Testis (tissue), 5 donors: ENCODE measurements at regions of chr22 and their contacts with region 1.

Region 1: DNA sequence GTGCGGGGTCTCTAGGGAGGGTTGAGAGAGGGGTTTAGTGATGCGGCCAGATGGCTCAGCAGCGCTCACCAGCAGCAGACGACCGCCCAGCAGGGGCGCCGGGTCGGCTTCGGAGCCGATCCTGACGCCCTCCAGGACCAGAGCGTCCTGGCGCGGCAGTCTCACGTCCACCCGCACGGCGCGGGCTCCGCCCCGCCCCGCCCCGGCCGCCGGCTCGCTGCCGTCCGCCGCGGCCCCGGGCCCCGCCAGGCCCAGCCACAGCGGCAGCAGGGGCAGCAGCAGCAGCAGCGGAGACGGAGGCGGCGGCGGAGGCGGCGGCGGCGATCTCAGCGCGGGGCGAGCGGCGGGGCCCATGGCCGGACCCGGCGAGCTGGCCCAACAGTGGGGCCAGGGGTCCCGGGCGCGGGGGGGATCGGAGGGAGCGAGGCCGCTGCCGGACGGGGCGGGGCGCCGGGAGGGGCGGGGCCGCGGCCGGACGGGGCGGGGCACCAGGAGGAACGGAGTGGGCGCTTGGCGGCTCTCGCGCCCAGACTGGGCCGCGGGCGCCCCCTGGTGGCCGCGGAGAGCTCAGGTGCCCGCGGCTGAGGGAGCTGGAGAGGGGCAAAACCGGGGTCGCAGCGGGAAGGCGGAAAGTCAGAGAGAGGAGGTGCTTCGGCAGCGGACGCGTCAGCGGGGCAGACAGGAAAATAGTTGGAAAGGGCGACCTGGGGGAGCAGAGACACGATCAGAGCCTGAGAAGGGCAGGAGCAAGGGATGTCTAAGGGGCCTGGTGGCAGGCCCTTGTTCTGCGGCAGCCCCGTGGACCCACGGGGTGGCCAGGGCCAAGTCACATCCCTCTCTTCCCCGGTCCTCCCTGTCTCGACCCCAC is at the start of gene RNF215:
- DNase-seq: peak; percentile 86
- H3K4me3 ChIP-seq: peak within 1 kb of the TSS; percentile 58 to 59
- H3K27ac ChIP-seq: peak within 1 kb of the TSS in 1 of 2 donors; percentile 69
- H3K4me1 ChIP-seq: peaks cover 10% of the 10 kb centered on the region
- H3K27me3 ChIP-seq: no peaks in the 10 kb centered on the region
- CTCF ChIP-seq: peak; percentile 96 to 98 (median 97)
- POLR2A ChIP-seq: no peak
- total RNA-seq, gene RNF215: 20.9 to 24.6 TPM

Region 2: GRCh38 chr22:30044369-30044768 is 342.8 kb before region 1 on chr22:
- intact Hi-C with region 1: no loop called
- DNase-seq: no peak
- H3K4me3 ChIP-seq: no peak overlapping the region
- H3K27ac ChIP-seq: no peak overlapping the region
- H3K4me1 ChIP-seq: no peaks in the 10 kb centered on the region
- H3K27me3 ChIP-seq: no peaks in the 10 kb centered on the region
- CTCF ChIP-seq: no peak
- POLR2A ChIP-seq: no peak

Region 3: GRCh38 chr22:30262917-30263741 is 124.1 kb before region 1 on chr22:
- intact Hi-C with region 1: loop called (anchors 5 kb)
- DNase-seq: peak; percentile 89
- H3K4me3 ChIP-seq: no peak overlapping the region
- H3K27ac ChIP-seq: no peak overlapping the region
- H3K4me1 ChIP-seq: peaks cover 4% of the 10 kb centered on the region
- H3K27me3 ChIP-seq: no peaks in the 10 kb centered on the region
- CTCF ChIP-seq: peak; percentile 98 to 100 (median 98)
- POLR2A ChIP-seq: no peak

Region 4: DNA sequence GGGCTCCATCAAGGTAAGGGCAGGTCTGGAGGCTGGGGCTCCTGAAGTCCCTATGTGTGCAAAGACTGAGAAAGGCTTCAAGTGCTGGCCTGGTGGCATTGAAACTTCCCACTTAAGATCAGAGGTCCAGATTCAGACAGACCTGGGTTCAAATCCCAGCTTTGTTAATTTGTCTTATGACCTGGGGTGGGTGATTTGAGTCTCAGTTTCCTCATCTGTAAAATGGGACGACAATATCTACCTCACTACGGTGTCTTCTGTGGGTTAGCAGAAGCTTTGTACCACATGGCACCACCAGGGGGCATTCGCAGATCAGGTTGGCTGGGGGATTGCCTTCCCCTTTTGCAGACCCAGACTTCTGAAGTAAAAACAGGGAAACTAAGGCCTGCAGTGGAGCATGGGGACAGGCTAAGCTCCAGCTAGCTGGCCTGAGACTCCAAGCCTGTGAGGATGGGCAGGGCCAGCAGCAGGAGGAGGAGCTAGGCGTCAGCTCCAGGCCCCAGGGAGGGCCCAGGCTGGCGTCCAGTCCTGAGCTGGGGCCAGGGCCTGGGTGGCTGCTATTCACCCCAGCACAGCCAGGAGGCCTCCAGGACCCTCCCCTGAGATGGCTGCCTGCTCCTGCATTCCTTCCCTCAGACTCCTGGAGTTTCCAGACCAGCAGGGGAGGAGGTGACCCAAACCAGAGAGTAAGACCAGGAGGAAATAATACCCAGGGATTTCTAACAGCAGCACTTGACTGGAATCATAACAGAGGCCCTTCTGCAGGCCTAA is 99.4 kb before region 1 on chr22:
- intact Hi-C with region 1: loop called (anchors 2 kb)
- DNase-seq: peak; percentile 91
- H3K4me3 ChIP-seq: peak overlapping the region in 1 of 2 donors; percentile 90
- H3K27ac ChIP-seq: peak overlapping the region; percentile 85
- H3K4me1 ChIP-seq: peaks cover 35% of the 10 kb centered on the region
- H3K27me3 ChIP-seq: no peaks in the 10 kb centered on the region
- CTCF ChIP-seq: peak; percentile 66 to 89 (median 67)
- POLR2A ChIP-seq: no peak

Region 5: GRCh38 chr22:30327864-30328345 is 59.3 kb before region 1 on chr22:
- intact Hi-C with region 1: no loop called
- DNase-seq: no peak
- H3K4me3 ChIP-seq: no peak overlapping the region
- H3K27ac ChIP-seq: no peak overlapping the region
- H3K4me1 ChIP-seq: peaks cover 28% of the 10 kb centered on the region
- H3K27me3 ChIP-seq: no peaks in the 10 kb centered on the region
- CTCF ChIP-seq: no peak
- POLR2A ChIP-seq: no peak